Activated naive CD4-positive, alpha-beta T cell treated with anti-CD3 and anti-CD28 coated beads for 36 hours (primary cell): ENCODE measurements at regions of chrX and their contacts with region 1.

Region 1: DNA sequence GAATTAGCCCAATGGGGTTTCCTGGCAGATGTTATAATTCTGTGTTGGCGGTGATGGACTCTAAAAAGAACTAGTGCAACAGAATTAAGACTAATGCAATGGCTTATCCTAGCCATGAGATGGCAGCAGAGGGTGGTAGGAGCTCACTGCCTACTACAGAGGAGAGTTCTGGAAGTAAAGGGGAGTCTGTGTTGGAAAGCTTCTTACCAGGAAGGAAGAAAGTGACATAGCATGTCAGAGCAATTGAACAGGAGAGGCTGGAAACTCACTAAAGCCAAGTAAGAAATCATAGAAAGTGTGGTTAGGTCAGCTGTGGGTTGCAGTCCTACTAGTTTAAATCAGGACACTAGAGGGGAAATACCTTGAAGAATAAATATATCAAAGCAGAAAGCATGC is 6.3 kb upstream of the TRPC5OS start:
- DNase-seq: peak; percentile 5
- H3K4me3 Mint-ChIP-seq: no peak overlapping the region
- H3K27ac Mint-ChIP-seq: no peak overlapping the region
- H3K4me1 Mint-ChIP-seq: peaks cover 5% of the 10 kb centered on the region
- H3K27me3 Mint-ChIP-seq: peaks cover 4% of the 10 kb centered on the region

Region 2: DNA sequence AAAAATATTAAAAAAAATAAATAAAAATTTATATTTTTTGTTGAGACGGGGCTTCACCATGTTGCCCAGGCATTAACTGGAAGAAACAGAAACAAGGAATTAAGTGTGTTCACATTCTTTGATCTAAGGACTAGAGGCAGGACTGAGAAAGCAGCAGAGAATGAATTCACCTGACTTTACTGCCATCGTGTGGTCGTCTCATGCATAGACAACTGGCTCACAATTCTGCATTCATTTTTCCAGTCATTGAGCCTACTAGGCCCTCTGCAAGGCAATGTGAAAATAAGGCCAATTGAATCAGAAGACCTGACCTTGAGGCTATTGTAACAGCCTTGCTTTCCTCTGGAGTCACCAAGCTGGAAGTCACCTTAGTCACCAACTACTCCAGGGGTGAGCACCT is 772.7 kb after region 1 on chrX:
- CTCF ChIA-PET with region 1: no interaction called
- intact Hi-C with region 1: loop called (anchors 1 kb)
- DNase-seq: peak; percentile 42
- H3K4me3 Mint-ChIP-seq: no peak overlapping the region
- H3K27ac Mint-ChIP-seq: no peak overlapping the region
- H3K4me1 Mint-ChIP-seq: peaks cover 20% of the 10 kb centered on the region
- H3K27me3 Mint-ChIP-seq: no peaks in the 10 kb centered on the region

Region 3: GRCh38 chrX:112731793-112732575 is 862.3 kb after region 1 on chrX:
- CTCF ChIA-PET with region 1: interaction called, 3 read pairs
- intact Hi-C with region 1: loop called (anchors 5 kb)
- DNase-seq: no peak
- H3K4me3 Mint-ChIP-seq: no peak overlapping the region
- H3K27ac Mint-ChIP-seq: no peak overlapping the region
- H3K4me1 Mint-ChIP-seq: peaks cover 3% of the 10 kb centered on the region
- H3K27me3 Mint-ChIP-seq: no peaks in the 10 kb centered on the region